Posterior vena cava (tissue), 2 donors: ENCODE measurements at regions of chr6 and their contacts with region 1.

Region 1: DNA sequence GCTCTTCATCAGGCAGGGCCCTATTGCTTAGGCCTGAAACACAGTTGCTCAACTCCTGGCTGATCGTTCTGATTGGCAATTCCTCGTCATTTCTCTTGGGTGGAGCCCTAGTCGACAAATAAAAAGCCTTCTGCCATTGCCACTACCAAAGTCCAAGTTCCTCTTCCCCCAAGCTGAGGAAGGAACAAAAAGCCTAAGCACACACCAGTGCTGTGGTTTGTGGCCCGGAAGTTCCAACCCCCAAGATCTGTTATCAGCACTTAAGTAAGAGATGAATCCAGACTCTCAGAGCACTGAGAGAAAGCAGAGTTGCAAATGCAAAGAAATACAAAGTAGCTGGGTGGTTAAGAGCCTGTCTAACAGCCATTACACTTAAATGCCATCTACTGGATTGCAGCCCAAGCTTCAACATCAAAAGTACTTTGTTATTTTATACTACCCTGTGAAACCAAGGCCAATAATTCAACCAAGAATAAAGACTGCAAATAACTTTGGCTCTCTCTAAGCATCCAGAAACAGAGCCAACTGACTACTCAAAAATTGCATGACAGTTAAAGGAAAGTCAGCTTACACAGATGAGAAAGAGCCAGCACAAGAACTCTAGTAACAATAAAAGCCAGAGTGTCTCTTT is 1024.0 kb downstream of the GRIK2 start:
- DNase-seq: no peak

Region 2: GRCh38 chr6:100768816-100769351 is 1648.6 kb before region 1 on chr6:
- intact Hi-C with region 1: loop called in 1 of 2 experiments (anchors 10 kb)
- DNase-seq: no peak

Region 3: GRCh38 chr6:102298051-102298450 is 119.4 kb before region 1 on chr6:
- intact Hi-C with region 1: no loop called
- DNase-seq: no peak

Region 4: DNA sequence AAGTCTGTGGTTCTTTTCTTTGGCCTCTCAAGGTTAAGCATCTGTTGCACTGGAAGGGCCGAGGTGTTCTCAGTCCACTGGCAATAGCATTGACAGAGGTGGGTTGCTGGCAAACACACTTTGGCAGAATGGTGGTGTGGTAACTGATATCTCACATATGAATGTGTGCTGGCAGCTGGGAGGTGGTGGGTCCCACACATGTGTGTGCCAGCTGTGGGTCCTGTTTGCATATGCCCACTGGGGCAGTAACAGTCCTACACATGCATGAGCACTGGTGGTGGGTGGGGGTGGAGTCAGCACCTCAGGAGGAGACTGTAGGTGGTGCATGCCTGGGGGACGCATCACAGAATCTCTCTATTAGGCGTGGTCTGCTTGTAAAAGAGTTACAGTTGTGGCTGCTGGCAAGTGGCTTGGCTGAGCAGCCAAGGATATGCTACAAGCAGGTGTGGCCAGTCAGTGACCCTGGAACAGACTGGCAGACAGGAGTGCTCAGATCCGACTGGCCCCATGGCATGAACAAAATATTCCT is 89.7 kb before region 1 on chr6:
- intact Hi-C with region 1: no loop called
- DNase-seq: peak; percentile 62

Region 5: DNA sequence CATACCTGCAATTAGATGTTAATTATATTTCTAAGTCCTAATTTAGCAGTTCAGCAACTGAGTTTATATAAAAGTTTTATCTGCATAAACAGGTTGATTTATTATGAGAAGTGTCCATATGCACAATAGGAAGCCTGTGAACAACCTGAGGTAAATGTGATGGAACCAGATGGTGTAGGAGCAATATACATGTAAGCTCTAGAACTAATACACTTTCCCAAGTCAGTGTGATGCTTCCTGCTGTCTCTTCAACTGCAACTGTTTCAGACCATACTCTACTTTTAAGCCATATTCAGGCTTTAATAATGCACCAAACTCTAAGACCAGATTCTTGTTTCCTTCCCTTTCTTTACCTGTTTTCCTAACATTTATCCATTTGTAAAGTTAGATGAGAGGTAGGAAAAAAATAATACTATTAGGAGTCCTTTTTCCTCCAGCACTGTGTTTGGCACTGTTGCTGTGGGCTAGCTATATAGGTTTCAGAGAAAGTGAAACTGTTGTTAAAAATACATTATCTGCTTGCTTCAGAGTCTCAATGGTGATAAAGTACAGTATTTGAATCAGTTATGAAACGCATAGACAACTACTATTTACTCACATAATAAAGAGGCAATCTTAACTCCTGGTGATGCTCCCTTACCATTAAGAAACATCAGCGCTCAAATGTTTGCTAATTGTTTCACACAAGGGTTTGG is 14.7 kb before region 1 on chr6:
- intact Hi-C with region 1: no loop called
- DNase-seq: no peak

Region 6: DNA sequence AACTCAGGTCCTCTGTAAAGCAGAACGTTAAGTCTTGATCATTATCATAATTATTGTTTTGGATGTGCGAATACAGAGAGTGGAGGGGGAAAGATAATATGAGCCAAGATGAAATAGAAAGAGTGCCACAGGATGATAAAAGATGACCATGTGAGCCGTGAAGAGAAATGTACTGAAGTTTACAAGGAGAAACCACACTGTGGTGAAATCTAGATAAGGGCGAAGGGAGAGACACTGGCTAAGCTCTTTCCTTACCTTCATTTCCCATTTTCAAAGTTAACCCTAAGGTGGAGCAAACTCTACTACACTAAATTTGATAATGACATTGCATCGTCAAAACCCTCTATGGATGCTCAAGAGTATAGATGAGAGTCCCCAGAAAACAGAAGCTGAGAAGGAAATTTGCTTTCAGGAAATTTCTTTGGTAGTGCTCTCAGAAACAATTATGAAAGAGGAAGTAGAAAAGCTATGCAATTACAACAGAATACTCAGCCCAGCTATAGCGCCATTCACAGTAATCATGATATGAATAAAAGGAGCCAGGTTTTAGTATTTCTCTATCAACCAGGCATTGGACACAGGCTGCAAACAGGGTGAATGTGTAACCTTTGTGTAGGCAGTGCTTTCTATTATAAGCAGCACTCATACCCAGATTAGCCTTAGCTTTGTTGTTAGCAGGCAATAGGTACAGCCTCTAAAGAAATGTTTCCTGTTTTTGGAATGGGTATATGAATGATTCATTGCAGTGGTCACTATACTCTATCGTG is 56.7 kb after region 1 on chr6:
- intact Hi-C with region 1: loop called in 1 of 2 experiments (anchors 5 kb)
- DNase-seq: no peak